ENCODE measurements at regions of chr16 and their contacts with region 1.

Region 1: DNA sequence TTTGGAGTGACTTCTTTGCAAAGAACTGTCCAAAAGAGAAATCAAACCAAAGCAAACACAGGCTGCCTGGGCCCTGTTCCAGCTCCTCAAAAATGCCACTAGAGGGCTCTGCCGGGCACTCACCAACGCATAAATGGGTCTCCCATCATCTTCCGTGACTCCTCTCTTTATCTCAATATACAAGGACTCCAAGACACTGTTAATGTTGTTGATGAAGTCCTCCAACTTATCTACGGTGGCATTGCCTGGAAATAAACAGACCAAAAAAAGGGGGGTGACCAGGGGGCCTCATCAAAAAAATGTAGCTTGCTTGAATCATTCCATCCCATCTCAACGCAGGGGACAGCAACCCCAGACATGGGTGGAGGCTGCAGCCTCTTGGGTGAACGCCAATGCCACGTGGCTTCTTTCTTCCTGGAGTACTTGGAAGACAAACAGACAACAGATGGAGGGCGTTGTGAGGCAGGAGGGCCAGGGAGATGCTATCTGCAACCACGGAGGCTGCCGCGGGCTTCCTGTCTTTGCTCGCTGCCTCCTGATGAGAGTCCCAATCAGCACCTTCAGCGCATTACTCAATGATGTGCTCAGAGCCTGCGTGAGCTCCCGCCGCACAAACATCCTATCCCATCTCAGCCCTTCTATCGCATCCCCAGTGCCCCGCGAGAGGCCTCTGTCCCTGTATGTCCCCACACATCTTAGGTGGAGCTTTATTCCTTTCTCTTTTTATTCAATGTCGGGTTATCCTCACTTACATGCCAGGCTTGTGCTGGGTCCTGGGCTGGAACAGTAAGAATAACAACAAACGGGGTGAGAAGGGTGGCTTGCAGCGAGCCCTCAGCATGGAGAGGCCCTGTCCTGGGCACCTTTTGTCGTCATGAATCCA is 32.0 kb downstream of the KDM8 start:
- DNase-seq: peak; percentile 94
- H3K4me3 Mint-ChIP-seq: peak overlapping the region; percentile 77
- H3K27ac Mint-ChIP-seq: peak overlapping the region; percentile 100
- H3K4me1 Mint-ChIP-seq: peaks cover 87% of the 10 kb centered on the region
- H3K27me3 Mint-ChIP-seq: no peaks in the 10 kb centered on the region

Region 2: GRCh38 chr16:26598061-26598460 is 637.2 kb before region 1 on chr16:
- intact Hi-C with region 1: loop called (anchors 10 kb)
- DNase-seq: peak; percentile 82
- H3K4me3 Mint-ChIP-seq: peak overlapping the region; percentile 51
- H3K27ac Mint-ChIP-seq: peak overlapping the region; percentile 94
- H3K4me1 Mint-ChIP-seq: peaks cover 76% of the 10 kb centered on the region
- H3K27me3 Mint-ChIP-seq: no peaks in the 10 kb centered on the region

Region 3: GRCh38 chr16:27203429-27204231 is 31.7 kb before region 1 on chr16 and contains the start of gene KDM8:
- intact Hi-C with region 1: loop called (anchors 1 kb)
- DNase-seq: peak; percentile 100
- H3K4me3 Mint-ChIP-seq: peak within 1 kb of the TSS; percentile 90
- H3K27ac Mint-ChIP-seq: peak within 1 kb of the TSS; percentile 100
- H3K4me1 Mint-ChIP-seq: peaks cover 44% of the 10 kb centered on the region
- H3K27me3 Mint-ChIP-seq: no peaks in the 10 kb centered on the region
- total RNA-seq, gene KDM8: 13.5 and 17.3 TPM in 2 replicates

Region 4: GRCh38 chr16:27273670-27274423 is 38.6 kb after region 1 on chr16:
- intact Hi-C with region 1: loop called (anchors 1 kb)
- DNase-seq: peak; percentile 53
- H3K4me3 Mint-ChIP-seq: peak overlapping the region; percentile 51
- H3K27ac Mint-ChIP-seq: peak overlapping the region; percentile 98
- H3K4me1 Mint-ChIP-seq: peaks cover 64% of the 10 kb centered on the region
- H3K27me3 Mint-ChIP-seq: no peaks in the 10 kb centered on the region

Region 5: GRCh38 chr16:27318392-27319226 is 83.3 kb after region 1 on chr16:
- intact Hi-C with region 1: loop called (anchors 1 kb)
- DNase-seq: peak; percentile 54
- H3K4me3 Mint-ChIP-seq: peak overlapping the region; percentile 100
- H3K27ac Mint-ChIP-seq: peak overlapping the region; percentile 98
- H3K4me1 Mint-ChIP-seq: peaks cover 60% of the 10 kb centered on the region
- H3K27me3 Mint-ChIP-seq: no peaks in the 10 kb centered on the region

Region 6: DNA sequence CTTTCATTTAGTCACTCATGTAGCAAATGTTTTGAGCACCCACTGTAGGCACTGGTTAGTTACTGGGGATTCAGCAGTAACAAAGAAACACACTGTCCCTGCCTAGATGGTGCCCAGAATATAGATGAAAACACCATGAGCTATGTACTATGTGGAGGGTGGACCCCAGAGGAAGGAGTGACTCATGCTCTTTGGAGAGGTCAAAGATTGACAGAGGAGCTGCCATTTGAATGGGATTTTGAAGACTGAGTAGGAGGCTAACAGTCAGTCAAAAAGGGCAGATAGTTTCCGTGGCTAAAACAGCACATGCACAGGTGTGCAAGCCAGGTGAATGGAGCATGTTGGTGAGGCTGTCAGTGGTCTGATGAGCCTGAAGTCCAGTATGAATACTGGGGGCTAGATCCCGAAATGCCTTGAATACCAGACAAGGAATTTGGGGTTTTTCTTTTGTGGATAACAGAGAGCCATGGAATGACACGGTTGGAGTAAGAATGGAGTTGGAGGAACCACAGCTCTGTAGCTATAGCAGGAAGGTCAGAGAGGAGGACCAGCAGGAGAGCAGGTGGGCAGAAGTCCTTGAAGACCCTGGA is 172.8 kb after region 1 on chr16:
- intact Hi-C with region 1: loop called (anchors 1 kb)
- DNase-seq: no peak
- H3K4me3 Mint-ChIP-seq: peak overlapping the region; percentile 99
- H3K27ac Mint-ChIP-seq: peak overlapping the region; percentile 96
- H3K4me1 Mint-ChIP-seq: peaks cover 57% of the 10 kb centered on the region
- H3K27me3 Mint-ChIP-seq: no peaks in the 10 kb centered on the region